ENCODE measurements at regions of chr18 and their contacts with region 1.

Region 1: GRCh38 chr18:79507076-79507545 is 111.4 kb downstream of the NFATC1 start:
- DNase-seq: peak; percentile 90 to 96 (median 95)
- ATAC-seq: peak; percentile 93 to 95
- H3K4me3 ChIP-seq: peak overlapping the region; percentile 1
- H3K27ac ChIP-seq: peak overlapping the region; percentile 78
- H3K4me1 ChIP-seq: peaks cover 6% of the 10 kb centered on the region
- H3K27me3 ChIP-seq: no peaks in the 10 kb centered on the region

Region 2: DNA sequence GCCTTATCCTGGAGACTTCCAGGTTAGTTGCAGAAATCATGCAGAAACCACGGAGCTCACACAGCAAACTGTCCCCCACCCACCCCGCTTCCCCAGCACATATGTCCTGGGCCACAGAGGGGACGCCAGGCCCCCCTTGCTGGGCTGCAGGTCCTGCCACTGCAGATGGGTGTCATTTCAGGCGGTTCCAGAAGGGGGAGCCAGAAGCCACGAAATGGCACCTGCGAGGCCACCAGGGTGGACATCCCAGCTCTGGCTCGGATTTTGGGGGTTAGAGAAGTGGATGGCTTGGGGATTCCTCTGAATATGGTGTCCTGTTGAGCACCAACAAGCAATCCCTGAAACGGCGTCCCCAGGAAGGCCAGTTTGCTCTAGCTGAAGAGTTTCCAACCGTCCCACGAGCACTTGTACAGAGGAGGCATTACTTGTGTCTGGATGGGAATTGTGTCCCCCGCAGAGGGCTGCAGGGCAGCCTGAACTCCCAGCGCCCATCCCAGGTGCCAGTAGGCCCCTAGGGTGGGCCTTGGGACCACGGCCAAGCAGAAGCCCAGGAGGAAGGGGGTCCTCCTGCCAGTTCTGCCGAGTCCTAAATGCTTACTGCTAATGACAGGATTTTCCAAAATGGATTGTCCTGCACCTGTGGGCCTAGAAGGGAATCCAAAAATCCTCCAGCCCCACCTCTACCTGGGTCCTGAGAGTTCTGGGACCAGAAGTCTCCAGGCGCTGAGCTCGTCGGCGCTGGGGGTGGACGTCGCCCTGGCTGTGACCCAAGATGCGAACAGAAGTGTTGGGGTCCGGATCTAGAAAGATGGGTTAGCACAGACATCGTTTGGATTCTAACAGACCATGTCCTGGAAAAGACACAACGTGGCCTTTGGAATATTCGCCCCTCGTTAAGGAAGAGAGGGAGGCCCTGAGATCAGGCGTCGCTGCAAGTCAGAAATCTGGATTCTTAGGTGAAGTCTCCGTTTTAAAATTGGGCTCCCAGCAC is 126.0 kb before region 1 on chr18:
- intact Hi-C with region 1: no loop called
- DNase-seq: peak; percentile 63 to 89 (median 86)
- ATAC-seq: peak; percentile 52
- H3K4me3 ChIP-seq: no peak overlapping the region
- H3K27ac ChIP-seq: no peak overlapping the region
- H3K4me1 ChIP-seq: no peaks in the 10 kb centered on the region
- H3K27me3 ChIP-seq: no peaks in the 10 kb centered on the region

Region 3: GRCh38 chr18:79393635-79394533 is 113.2 kb before region 1 on chr18:
- intact Hi-C with region 1: loop called in 3 of 4 experiments (anchors 2 to 5 kb)
- DNase-seq: peak; percentile 98 to 99 (median 98)
- ATAC-seq: peak; percentile 82
- H3K4me3 ChIP-seq: peak overlapping the region; percentile 60
- H3K27ac ChIP-seq: peak overlapping the region; percentile 96
- H3K4me1 ChIP-seq: peaks cover 4% of the 10 kb centered on the region
- H3K27me3 ChIP-seq: no peaks in the 10 kb centered on the region

Measured in right cardiac atrium (tissue), 5 donors.